Activated CD4-positive, alpha-beta memory T cell treated with anti-CD3 and anti-CD28 coated beads for 36 hours (primary cell): ENCODE measurements at regions of chr11 and their contacts with region 1.

Region 1: GRCh38 chr11:116787786-116788486 is at the start of gene ZPR1:
- DNase-seq: peak; percentile 90
- H3K4me3 Mint-ChIP-seq: peak within 1 kb of the TSS; percentile 95
- H3K27ac Mint-ChIP-seq: peak within 1 kb of the TSS; percentile 91
- H3K4me1 Mint-ChIP-seq: peaks cover 54% of the 10 kb centered on the region
- H3K27me3 Mint-ChIP-seq: no peaks in the 10 kb centered on the region
- total RNA-seq, gene ZPR1: 101 to 102 TPM

Region 2: DNA sequence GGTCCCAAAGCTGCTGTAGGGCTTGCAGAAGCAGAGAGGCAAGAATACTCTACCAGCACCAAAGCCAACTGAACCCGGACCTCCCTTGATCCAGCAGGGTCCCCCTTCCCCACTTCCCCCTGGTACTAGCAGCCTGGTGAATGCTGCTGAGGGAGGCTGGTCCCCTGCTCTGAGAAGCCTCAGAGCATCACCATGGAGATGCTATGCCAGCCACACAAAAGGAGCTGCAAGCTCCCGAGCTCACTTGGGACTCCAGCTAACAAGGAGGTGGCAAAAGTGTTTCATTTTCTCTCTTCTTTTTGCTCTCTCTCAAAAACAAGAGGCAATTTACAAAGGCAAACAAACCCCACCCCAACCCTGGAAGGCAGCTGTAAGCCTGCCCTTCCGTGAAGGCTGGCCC is 524.9 kb before region 1 on chr11:
- CTCF ChIA-PET with region 1: no interaction called
- POLR2A ChIA-PET with region 1: no interaction called
- intact Hi-C with region 1: no loop called
- DNase-seq: no peak
- H3K4me3 Mint-ChIP-seq: no peak overlapping the region
- H3K27ac Mint-ChIP-seq: no peak overlapping the region
- H3K4me1 Mint-ChIP-seq: no peaks in the 10 kb centered on the region
- H3K27me3 Mint-ChIP-seq: peaks cover 14% of the 10 kb centered on the region

Region 3: DNA sequence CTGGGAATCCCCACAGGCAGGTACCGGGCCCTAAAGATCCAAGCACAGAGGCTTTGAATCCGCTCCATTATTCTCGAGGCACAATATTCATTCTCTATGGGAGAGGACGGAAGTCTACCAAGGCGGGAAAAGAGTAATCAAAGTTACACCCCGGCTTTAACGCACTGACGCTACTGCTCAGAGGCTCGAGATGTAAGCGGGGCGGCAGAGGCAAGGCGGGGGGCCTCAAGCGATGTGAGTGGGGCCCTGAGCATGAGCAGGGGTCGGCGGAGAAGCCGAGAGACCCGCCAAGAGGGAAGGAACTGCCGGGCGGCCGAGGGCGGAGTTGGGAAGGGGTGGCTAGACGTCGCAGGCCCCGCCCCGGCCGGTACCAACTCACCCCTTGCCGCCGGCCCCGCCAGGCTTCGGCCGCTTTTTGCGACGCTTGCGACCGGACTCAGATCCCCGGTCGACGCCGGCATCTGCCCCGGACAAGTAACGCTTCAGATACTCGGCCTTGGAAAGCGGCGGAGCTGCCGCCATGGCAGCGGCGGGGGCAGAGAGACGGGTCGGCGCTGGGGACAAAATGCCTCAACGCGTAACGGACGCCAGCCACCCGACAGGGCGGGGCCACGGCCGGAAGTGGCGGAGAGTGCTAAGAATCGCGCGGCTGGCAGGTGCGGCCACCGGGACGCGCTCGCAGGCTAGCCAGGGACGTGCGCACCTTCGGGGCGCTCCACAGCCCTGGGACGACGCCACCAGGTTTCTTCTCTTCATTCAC is 15.3 kb before region 1 on chr11 and contains the start of gene BUD13:
- CTCF ChIA-PET with region 1: interaction called, 15 read pairs
- POLR2A ChIA-PET with region 1: interaction called, 10 read pairs
- intact Hi-C with region 1: loop called (anchors 1 kb)
- DNase-seq: peak; percentile 96
- H3K4me3 Mint-ChIP-seq: peak within 1 kb of the TSS; percentile 99
- H3K27ac Mint-ChIP-seq: peak within 1 kb of the TSS; percentile 95
- H3K4me1 Mint-ChIP-seq: peaks cover 55% of the 10 kb centered on the region
- H3K27me3 Mint-ChIP-seq: no peaks in the 10 kb centered on the region
- total RNA-seq, gene BUD13: 30.3 to 32.7 TPM

Region 4: DNA sequence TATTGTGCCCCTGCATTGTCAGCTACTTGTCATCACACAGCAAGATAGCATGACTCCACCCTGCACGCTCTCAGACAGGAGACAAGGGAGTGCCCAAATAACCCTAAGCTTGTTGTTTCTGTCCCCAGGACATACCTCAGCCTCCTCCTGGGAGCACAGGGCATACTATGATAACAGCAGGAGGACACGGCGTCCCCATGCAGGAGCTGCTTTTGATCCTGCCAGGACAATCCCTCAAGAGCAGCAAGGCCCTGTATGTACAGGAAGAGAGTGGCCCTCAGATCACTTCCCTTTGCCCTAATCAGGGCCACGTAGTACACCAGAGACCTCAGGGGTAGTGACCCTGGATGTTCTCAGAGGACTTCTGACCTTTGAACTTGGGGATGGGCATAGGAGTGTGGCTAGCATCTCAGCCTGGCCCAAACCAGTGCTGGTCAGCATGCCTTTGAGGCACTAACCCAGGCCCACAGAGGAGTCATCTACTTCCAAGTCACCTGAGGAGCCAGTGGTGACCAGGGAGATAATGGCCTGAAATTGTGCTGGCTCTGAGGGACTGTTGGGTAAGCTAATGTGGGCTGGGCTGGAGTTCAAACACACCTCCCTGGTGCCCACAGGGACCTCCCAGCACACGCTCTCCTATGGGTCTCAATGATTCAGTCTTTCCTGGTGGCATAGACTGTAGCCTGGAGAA is 26.0 kb after region 1 on chr11:
- CTCF ChIA-PET with region 1: interaction called, 20 read pairs
- POLR2A ChIA-PET with region 1: no interaction called
- intact Hi-C with region 1: no loop called
- DNase-seq: no peak
- H3K4me3 Mint-ChIP-seq: no peak overlapping the region
- H3K27ac Mint-ChIP-seq: no peak overlapping the region
- H3K4me1 Mint-ChIP-seq: no peaks in the 10 kb centered on the region
- H3K27me3 Mint-ChIP-seq: no peaks in the 10 kb centered on the region

Region 5: DNA sequence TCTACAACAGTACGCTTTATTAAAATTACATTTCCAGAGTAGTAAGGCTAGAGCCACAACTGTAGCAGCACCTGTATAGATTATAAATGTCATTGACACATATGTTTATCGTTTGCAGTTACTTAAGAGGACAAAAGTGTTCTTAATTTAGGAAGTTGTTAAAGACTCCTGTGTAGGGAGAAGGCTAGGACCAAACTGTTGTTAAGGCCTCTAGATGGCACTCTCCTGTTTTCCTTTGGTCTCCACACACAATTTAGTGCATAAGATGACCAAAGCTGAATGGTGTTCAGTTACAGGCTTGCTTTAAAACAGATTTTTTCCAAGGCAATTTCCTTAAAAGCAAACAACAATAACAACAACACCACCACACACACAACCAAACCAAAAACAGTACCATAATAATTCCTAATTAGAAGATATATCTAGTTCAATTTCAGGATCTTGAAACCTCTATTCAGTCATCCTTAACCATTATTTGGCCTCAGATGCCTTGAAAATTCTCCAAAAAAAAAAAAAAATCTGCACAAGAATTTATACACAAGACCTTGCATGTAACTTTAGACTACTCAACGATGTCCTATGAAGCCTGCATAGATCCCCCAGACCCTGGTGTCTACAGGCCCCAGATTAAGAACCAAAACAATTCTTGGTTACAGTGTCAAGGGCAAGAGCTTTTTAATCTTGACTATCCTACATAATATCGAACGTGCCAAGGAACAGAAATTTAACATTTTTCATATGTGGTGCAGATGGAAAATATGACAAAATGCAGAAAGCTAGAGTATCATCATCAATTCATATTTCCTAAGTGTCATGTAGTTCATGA is 92.1 kb after region 1 on chr11:
- CTCF ChIA-PET with region 1: interaction called, 16 read pairs
- POLR2A ChIA-PET with region 1: no interaction called
- intact Hi-C with region 1: no loop called
- DNase-seq: no peak
- H3K4me3 Mint-ChIP-seq: no peak overlapping the region
- H3K27ac Mint-ChIP-seq: no peak overlapping the region
- H3K4me1 Mint-ChIP-seq: peaks cover 28% of the 10 kb centered on the region
- H3K27me3 Mint-ChIP-seq: no peaks in the 10 kb centered on the region

Region 6: GRCh38 chr11:117107701-117108590 is 320.0 kb after region 1 on chr11:
- CTCF ChIA-PET with region 1: interaction called, 147 read pairs
- POLR2A ChIA-PET with region 1: no interaction called
- intact Hi-C with region 1: loop called (anchors 1 kb)
- DNase-seq: no peak
- H3K4me3 Mint-ChIP-seq: no peak overlapping the region
- H3K27ac Mint-ChIP-seq: no peak overlapping the region
- H3K4me1 Mint-ChIP-seq: no peaks in the 10 kb centered on the region
- H3K27me3 Mint-ChIP-seq: no peaks in the 10 kb centered on the region

Region 7: GRCh38 chr11:117226388-117227385 is 438.8 kb after region 1 on chr11:
- CTCF ChIA-PET with region 1: interaction called, 21 read pairs
- POLR2A ChIA-PET with region 1: no interaction called
- intact Hi-C with region 1: loop called (anchors 5 kb)
- DNase-seq: peak; percentile 45
- H3K4me3 Mint-ChIP-seq: no peak overlapping the region
- H3K27ac Mint-ChIP-seq: peak overlapping the region; percentile 33
- H3K4me1 Mint-ChIP-seq: peaks cover 29% of the 10 kb centered on the region
- H3K27me3 Mint-ChIP-seq: no peaks in the 10 kb centered on the region